GM12878 (cell line): ENCODE measurements at regions of chr9 and their contacts with region 1.

Region 1: GRCh38 chr9:128361986-128362646 is 9.1 kb upstream of the URM1 start:
- DNase-seq: no peak
- ATAC-seq: peak; percentile 96
- H3K4me3 ChIP-seq: peak overlapping the region; percentile 59; the same call in 1 of the 2 replicates
- H3K27ac ChIP-seq: no peak overlapping the region
- H3K4me1 ChIP-seq: peaks cover 7% of the 10 kb centered on the region
- H3K27me3 ChIP-seq: no peaks in the 10 kb centered on the region
- CTCF ChIP-seq: peak; percentile 90 to 92 (median 90)
- EP300 ChIP-seq: no peak
- POLR2A ChIP-seq: peak; percentile 28; the same call in 1 of the 2 replicates
- RAD21 ChIP-seq: peak; percentile 62

Region 2: GRCh38 chr9:128034821-128035764 is 327.0 kb before region 1 on chr9:
- CTCF ChIA-PET with region 1: no interaction called
- POLR2A ChIA-PET with region 1: no interaction called
- RAD21 ChIA-PET with region 1: no interaction called
- SMC1A ChIA-PET with region 1: no interaction called
- in situ Hi-C with region 1: no loop called
- intact Hi-C with region 1: no loop called
- DNase-seq: peak; percentile 60
- ATAC-seq: peak; percentile 82
- H3K4me3 ChIP-seq: no peak overlapping the region
- H3K27ac ChIP-seq: no peak overlapping the region
- H3K4me1 ChIP-seq: peaks cover 42% of the 10 kb centered on the region
- H3K27me3 ChIP-seq: no peaks in the 10 kb centered on the region
- CTCF ChIP-seq: peak; percentile 82 to 91 (median 91); a peak in 5 of 6 replicates
- EP300 ChIP-seq: no peak
- POLR2A ChIP-seq: no peak
- RAD21 ChIP-seq: peak; percentile 98

Region 3: GRCh38 chr9:128339771-128340690 is 22.1 kb before region 1 on chr9 and contains the start of gene SLC27A4:
- CTCF ChIA-PET with region 1: interaction called, 14 read pairs
- POLR2A ChIA-PET with region 1: no interaction called
- RAD21 ChIA-PET with region 1: interaction called, 8 read pairs
- SMC1A ChIA-PET with region 1: no interaction called
- in situ Hi-C with region 1: no loop called
- intact Hi-C with region 1: no loop called
- DNase-seq: peak; percentile 61
- ATAC-seq: peak; percentile 91
- H3K4me3 ChIP-seq: peak within 1 kb of the TSS; percentile 87
- H3K27ac ChIP-seq: peak within 1 kb of the TSS; percentile 24; the same call in 1 of the 2 replicates
- H3K4me1 ChIP-seq: no peaks in the 10 kb centered on the region
- H3K27me3 ChIP-seq: no peaks in the 10 kb centered on the region
- CTCF ChIP-seq: no peak
- EP300 ChIP-seq: no peak
- POLR2A ChIP-seq: peak; percentile 41; the same call in 1 of the 2 replicates
- RAD21 ChIP-seq: no peak
- polyA plus RNA-seq, gene SLC27A4: 0.13 to 1.1 TPM

Region 4: DNA sequence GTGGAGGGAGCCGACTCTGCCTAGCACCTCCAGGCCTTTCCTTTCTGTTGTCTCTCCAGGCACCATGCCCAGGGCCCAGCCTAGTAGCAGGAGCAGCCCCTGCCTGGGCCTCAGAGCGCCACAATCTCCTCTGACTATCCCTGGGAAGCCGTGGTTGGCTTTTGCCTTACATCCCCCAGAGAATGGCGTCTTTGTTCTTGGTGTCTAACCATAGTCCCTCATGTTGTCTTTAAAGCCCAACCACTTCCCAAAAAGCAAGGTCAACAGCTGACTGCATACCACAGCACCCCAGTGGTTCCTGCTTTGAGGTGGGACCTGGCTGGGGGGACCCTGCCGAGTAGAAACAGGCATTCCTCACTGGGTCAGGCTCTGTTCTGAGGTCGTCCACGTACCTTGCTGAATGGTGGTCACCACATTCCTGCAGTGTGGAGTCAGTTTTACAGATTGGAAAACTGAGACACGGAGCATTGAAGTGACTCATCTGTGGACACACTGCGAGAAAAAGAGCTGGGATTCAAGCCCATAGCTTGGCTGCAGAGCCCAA is 44.8 kb after region 1 on chr9:
- CTCF ChIA-PET with region 1: interaction called, 21 read pairs
- POLR2A ChIA-PET with region 1: interaction called, 3 read pairs
- RAD21 ChIA-PET with region 1: interaction called, 4 read pairs
- SMC1A ChIA-PET with region 1: interaction called, 3 read pairs
- in situ Hi-C with region 1: no loop called
- intact Hi-C with region 1: loop called (anchors 5 kb)
- DNase-seq: no peak
- ATAC-seq: no peak
- H3K4me3 ChIP-seq: no peak overlapping the region
- H3K27ac ChIP-seq: no peak overlapping the region
- H3K4me1 ChIP-seq: no peaks in the 10 kb centered on the region
- H3K27me3 ChIP-seq: peaks cover 1 to 2% of the 10 kb centered on the region in 2 experiments; a peak in 3 of 4 replicates
- CTCF ChIP-seq: no peak
- EP300 ChIP-seq: no peak
- POLR2A ChIP-seq: no peak
- RAD21 ChIP-seq: no peak

Region 5: DNA sequence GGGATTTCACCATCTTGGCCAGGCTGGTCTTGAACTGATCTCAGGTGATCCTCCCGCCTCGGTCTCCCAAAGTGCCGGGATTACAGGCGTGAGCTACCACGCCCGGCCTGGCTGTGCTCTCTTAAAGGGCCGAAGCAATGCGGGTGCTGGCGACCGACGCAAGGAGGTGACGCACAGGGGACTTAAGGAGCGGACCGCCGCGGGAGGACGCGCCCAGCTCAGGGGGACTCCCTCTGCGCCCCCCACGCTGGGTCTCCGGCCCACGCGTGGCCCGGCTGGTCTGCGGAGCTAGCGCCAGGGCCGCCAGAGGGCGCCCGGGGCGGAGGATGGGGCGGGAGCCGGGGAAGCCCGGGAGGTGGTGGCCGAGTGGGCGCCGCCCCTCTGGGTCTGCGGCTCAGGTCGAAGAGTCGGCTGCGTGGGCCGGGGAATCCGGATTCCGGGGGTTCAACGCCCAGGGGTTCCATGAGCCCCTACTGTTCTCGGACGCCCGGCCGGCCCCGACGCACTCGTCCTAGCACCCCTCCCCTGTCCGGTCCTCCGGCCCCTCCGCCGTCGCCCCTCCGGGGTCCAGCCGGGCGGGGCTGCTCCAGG is 58.0 kb after region 1 on chr9:
- CTCF ChIA-PET with region 1: interaction called, 26 read pairs
- POLR2A ChIA-PET with region 1: interaction called, 9 read pairs
- RAD21 ChIA-PET with region 1: interaction called, 3 read pairs
- SMC1A ChIA-PET with region 1: no interaction called
- in situ Hi-C with region 1: no loop called
- intact Hi-C with region 1: no loop called
- DNase-seq: no peak
- ATAC-seq: peak; percentile 93
- H3K4me3 ChIP-seq: peak overlapping the region; percentile 93
- H3K27ac ChIP-seq: no peak overlapping the region
- H3K4me1 ChIP-seq: peaks cover 10% of the 10 kb centered on the region
- H3K27me3 ChIP-seq: peaks cover 7 to 11% of the 10 kb centered on the region in 2 experiments
- CTCF ChIP-seq: peak; percentile 77 to 90 (median 84); a peak in 5 of 6 replicates
- EP300 ChIP-seq: no peak
- POLR2A ChIP-seq: no peak
- RAD21 ChIP-seq: peak; percentile 29; the same call in 1 of the 2 replicates

Region 6: DNA sequence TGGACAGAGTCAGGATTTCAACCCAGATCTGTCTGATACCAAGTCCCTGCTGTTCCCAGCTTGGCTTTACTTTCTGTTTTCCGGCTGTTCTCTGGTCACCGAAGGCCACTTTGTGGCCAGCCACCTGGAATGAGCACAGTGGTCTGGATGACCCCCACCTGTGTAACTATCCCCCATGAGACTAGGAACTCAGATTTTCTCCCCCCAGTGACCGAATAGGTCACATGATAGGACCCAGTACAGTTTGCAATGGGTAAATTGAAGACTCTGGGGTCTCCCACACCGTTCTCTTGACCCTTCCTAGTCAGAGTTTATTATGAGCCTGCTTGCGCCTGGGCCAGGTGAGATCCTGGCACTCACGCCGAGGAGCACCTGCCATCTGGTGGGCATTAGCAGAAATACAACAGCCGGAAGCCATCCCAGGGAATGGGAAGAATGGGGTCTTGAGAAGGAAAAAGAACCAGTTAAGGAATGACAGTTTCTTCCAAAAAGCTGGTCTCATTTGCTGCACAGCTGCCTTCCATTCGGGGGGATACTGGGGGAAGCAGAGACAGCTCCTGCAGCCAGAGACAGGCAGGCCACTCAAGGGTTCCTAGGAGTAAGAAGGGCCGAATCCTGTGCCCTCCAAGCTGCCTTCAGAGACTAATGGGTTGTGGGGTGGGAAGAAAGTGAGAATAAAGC is 565.8 kb after region 1 on chr9:
- CTCF ChIA-PET with region 1: interaction called, 12 read pairs
- POLR2A ChIA-PET with region 1: no interaction called
- RAD21 ChIA-PET with region 1: interaction called, 5 read pairs
- SMC1A ChIA-PET with region 1: interaction called, 3 read pairs
- in situ Hi-C with region 1: no loop called
- intact Hi-C with region 1: no loop called
- DNase-seq: peak; percentile 9
- ATAC-seq: peak; percentile 94
- H3K4me3 ChIP-seq: no peak overlapping the region
- H3K27ac ChIP-seq: no peak overlapping the region
- H3K4me1 ChIP-seq: no peaks in the 10 kb centered on the region
- H3K27me3 ChIP-seq: no peaks in the 10 kb centered on the region
- CTCF ChIP-seq: peak; percentile 82 to 95 (median 87)
- EP300 ChIP-seq: no peak
- POLR2A ChIP-seq: no peak
- RAD21 ChIP-seq: peak; percentile 95